IMR-90 (cell line): ENCODE measurements at regions of chr13 and their contacts with region 1.

Region 1: DNA sequence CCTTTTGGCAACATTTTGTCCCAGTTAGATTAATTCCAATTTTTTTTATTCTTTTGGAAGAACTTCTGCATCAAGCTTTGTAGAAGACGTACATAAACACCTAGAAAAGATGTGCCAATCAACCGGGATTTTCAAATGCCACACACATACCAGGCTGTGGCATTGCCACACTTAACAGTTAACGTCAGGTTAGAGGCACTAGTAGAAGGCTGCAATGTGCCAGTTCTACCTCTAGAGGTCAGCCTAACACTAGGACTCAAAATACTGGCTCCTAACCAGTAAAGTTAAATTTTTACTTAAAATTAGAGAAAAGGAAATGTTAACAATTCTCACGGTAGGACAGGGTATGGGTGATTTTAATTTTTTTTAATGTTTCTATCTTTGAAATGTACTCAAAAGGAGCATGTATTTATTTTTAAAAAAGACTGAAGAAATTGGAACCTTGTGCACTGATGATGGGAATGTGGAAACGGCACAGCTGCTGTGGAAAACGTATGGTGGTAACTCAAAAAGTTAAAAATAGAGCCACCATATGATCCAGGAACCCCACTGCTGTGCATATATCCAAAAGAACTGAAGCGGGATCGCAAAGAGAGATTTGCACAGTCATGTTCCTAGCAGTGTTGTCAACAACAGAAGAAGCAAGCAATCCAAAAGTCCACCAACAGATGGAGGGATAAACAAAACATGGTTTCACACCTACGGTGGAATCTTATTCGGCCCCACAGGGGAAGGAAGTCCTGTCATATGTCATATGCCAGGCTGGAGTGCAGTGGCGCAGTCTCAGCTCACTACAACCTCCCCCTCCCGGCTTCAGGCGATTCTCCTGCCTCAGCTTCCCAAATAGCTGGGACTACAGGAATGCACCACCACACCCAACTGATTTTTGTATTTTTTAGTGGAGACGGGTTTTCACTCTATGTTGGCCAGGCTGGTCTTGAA is 30.3 kb downstream of the CRYL1 start:
- DNase-seq: peak; percentile 72
- ATAC-seq: peak; percentile 91
- H3K4me3 ChIP-seq: no peak overlapping the region
- H3K27ac ChIP-seq: no peak overlapping the region
- H3K4me1 ChIP-seq: peaks cover 5% of the 10 kb centered on the region
- H3K27me3 ChIP-seq: no peaks in the 10 kb centered on the region
- CTCF ChIP-seq: peak; percentile 94
- POLR2A ChIP-seq: no peak
- RAD21 ChIP-seq: peak; percentile 98

Region 2: GRCh38 chr13:20182231-20182846 is 313.0 kb before region 1 on chr13:
- CTCF ChIA-PET with region 1: no interaction called
- POLR2A ChIA-PET with region 1: no interaction called
- dilution Hi-C with region 1: loop called (anchors 25 kb)
- in situ Hi-C with region 1: no loop called
- intact Hi-C with region 1: no loop called
- DNase-seq: peak; percentile 80
- ATAC-seq: peak; percentile 99
- H3K4me3 ChIP-seq: no peak overlapping the region
- H3K27ac ChIP-seq: no peak overlapping the region
- H3K4me1 ChIP-seq: no peaks in the 10 kb centered on the region
- H3K27me3 ChIP-seq: peaks cover 19% of the 10 kb centered on the region
- CTCF ChIP-seq: peak; percentile 79
- POLR2A ChIP-seq: no peak
- RAD21 ChIP-seq: peak; percentile 87

Region 3: DNA sequence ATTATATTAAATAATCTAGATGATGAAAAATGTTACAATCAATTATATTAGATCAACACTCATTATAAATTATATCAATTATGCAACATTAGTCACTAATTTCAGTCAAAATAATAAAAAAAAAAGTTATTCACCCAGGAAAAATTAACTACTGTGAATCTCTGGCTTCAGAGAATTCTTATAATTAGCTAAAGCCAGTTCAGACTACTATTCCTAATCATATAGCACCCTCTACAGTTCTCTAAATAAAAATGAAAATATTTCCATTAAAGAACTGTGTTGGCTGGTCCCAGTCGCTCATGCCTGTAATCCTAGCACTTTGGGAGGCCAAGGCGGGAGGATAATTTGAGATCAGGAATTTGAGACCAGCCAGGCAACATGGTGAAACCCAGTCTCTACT is 374.2 kb after region 1 on chr13:
- CTCF ChIA-PET with region 1: interaction called, 5 read pairs
- POLR2A ChIA-PET with region 1: no interaction called
- dilution Hi-C with region 1: no loop called
- in situ Hi-C with region 1: no loop called
- intact Hi-C with region 1: loop called (anchors 2 kb)
- DNase-seq: peak; percentile 11
- ATAC-seq: peak; percentile 35; the same call in 1 of the 2 replicates
- H3K4me3 ChIP-seq: no peak overlapping the region
- H3K27ac ChIP-seq: no peak overlapping the region
- H3K4me1 ChIP-seq: peaks cover 5% of the 10 kb centered on the region
- H3K27me3 ChIP-seq: no peaks in the 10 kb centered on the region
- CTCF ChIP-seq: peak; percentile 39
- POLR2A ChIP-seq: no peak
- RAD21 ChIP-seq: peak; percentile 49